ENCODE measurements at regions of chr10 and their contacts with region 1.

Region 1: DNA sequence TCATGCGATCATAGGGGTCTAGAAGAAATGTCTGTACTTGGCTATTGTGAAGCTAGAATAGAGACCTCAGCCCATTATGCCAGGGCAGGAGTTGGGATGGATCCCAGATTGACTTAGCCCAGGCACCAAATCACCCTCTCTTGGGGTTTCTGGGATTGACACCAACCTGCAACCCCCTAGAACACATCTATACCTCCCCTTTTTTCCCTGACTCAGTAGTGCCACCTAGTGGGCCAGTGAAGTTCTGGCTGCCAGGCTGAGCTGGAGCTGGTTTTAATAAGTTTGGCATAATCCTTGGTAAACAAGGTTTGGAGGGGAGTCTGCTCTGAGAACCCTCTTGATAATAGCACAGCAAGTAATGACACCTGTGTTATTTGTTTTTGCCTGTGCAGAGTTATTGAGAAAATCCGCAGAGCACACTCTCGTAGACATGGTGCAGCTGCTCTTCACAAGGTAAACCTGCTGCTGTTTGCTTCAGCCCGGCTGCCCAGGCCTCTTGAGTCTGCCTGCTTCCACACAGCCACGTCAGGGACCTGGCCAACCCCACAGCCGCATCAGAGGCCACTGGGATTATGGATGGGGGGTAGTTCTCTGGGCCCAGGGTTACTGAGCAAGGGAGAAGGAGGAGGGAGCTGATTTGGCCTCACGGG is 43.3 kb upstream of the NFKB2 start:
- DNase-seq: peak in 2 of 3 donors; percentile 58 to 73
- ATAC-seq: peak; percentile 76
- H3K4me3 ChIP-seq: no peak overlapping the region
- H3K4me1 ChIP-seq: no peaks in the 10 kb centered on the region
- CTCF ChIP-seq: peak; percentile 78

Region 2: DNA sequence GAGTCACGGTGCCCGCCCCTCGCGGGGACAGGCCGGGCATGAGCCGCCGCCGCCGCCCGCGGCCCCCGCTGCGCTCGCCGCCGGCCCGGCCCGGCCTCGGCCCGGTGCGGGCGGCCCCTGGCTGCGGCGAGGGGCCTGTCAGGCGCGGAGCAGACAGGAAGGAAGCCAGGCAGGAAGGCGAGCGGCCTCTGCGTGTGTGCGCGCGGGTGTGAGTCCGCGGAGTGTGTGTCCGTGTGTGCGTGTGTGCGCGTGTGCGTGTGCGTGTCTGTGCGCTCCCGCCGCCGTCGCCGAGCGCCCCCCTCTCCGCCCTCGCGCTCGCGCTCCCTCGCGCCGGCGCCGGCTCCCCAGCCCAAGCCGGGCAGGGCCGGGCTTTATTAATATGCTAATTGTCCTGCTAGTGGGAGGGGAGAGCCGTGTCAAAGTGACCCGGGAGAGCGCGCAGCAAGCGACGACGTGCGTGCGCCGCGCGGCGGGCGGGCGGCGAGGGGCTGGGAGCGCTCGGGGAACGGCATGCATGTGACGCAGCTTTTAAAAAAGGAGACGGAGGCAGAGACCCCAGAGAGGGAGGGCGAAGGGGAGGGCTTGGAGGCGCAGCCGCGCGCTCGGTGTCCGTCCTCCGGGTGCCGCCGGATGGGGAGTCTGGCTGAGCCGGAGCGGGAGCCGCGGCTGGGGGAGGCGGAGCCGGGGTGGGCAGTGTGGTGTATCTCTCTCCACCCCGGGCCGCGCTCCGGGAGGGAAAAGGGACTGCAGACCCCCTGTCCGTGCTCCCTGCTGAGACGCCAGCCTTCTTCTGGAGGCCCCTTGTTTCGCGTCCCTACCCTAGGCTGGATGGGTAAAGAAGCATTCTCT is 231.8 kb before region 1 on chr10 and contains the start of gene LDB1:
- intact Hi-C with region 1: no loop called
- DNase-seq: peak; percentile 79 to 88 (median 84)
- ATAC-seq: peak; percentile 79
- H3K4me3 ChIP-seq: peak within 1 kb of the TSS; percentile 46
- H3K4me1 ChIP-seq: peaks cover 29% of the 10 kb centered on the region
- CTCF ChIP-seq: no peak
- total RNA-seq, gene LDB1: 32.3 to 92.2 (median 37.2) TPM

Region 3: GRCh38 chr10:102167861-102168260 is 184.3 kb before region 1 on chr10:
- intact Hi-C with region 1: loop called in 1 of 2 experiments (anchors 10 kb)
- DNase-seq: no peak
- ATAC-seq: no peak
- H3K4me3 ChIP-seq: no peak overlapping the region
- H3K4me1 ChIP-seq: no peaks in the 10 kb centered on the region
- CTCF ChIP-seq: no peak

Region 4: DNA sequence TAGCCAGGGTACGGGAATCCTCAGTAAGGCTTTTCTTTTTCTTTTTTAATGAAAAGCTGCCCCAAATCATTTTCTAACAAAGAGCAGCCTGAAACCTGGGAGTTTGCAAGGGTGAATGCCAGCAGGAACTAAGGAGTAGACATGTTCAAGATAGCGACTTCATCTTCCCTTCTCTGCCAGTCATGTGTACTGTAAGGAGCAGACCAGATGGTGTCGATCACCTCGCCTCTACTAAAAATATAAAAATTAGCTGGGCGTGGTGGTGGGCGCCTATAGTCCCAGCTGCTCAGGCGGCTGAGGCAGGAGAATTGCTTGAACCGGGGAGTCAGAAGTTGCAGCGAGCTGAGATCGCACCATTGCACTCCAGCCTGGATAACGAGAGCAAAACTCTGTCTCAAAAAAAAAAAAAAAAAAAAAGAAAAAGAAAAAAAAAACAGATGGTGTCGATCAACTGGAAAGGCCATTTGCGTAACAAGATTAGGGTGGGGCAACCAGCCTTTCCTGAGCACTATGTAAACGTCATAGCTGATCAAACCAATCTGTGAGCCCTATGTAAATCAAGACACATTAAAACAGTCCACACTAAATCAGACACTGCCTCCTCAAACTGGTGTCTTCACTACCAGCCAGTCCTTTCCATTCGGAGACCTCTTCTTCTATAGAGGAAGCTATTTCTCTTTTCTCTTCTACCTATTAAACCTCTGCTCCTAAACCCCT is 166.2 kb before region 1 on chr10:
- intact Hi-C with region 1: no loop called
- DNase-seq: no peak
- ATAC-seq: peak; percentile 34
- H3K4me3 ChIP-seq: no peak overlapping the region
- H3K4me1 ChIP-seq: peaks cover 15% of the 10 kb centered on the region
- CTCF ChIP-seq: no peak

Region 5: GRCh38 chr10:102225646-102226541 is 126.3 kb before region 1 on chr10 and contains the start of gene ELOVL3:
- intact Hi-C with region 1: loop called (anchors 5 kb)
- DNase-seq: peak; percentile 93 to 94 (median 94)
- ATAC-seq: peak; percentile 97
- H3K4me3 ChIP-seq: no peak within 1 kb of the TSS
- H3K4me1 ChIP-seq: peaks cover 18% of the 10 kb centered on the region
- CTCF ChIP-seq: no peak
- total RNA-seq, gene ELOVL3: 0.22 TPM in 1 of 3 donors, not detected in the others

Region 6: GRCh38 chr10:102776779-102777456 is 424.7 kb after region 1 on chr10:
- intact Hi-C with region 1: no loop called
- DNase-seq: peak in 2 of 3 donors; percentile 57 to 60
- ATAC-seq: peak; percentile 76
- H3K4me3 ChIP-seq: no peak overlapping the region
- H3K4me1 ChIP-seq: peaks cover 6% of the 10 kb centered on the region
- CTCF ChIP-seq: no peak

Measured in mucosa of descending colon (tissue), 3 donors.